Vagina (tissue), 2 donors: ENCODE measurements at regions of chr5 and their contacts with region 1.

Region 1: DNA sequence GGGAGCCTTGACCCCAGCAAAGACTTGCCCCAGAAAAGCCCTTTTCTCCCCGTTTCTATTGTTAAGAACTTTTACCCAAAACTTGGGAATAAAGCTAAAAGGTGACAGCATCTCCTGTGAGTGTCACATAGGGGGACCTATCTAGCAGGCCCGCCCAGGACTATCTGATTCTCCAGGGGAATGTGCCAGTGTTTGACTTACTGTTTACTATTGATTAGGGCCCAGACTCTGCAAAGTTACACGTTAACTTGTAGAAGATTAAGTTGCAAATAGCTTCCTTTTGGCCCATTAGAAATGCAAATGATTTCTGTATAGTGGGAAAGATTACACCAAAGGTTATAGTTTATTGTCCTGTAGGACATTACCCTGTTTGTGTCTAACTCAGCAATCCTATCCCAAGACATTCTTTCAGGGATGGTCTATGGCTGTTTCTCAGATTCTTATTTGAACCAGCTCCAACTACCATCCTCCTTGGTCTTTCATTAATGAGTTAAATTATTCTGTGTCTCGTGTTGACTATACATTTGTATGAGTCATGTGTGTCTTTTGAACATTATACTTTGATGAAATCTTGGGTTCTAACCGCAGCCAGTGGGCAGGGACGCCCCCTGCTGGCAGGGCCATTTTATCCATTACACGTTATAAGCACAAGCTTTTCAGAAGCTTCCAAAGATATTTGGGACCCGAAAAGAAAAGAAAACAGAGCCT is 60.7 kb downstream of the HRH2 start:
- DNase-seq: no peak
- H3K4me3 ChIP-seq: no peak overlapping the region
- H3K27ac ChIP-seq: no peak overlapping the region
- H3K4me1 ChIP-seq: no peaks in the 10 kb centered on the region
- H3K27me3 ChIP-seq: no peaks in the 10 kb centered on the region
- CTCF ChIP-seq: peak; percentile 15 to 47 (median 26)
- POLR2A ChIP-seq: no peak

Region 2: GRCh38 chr5:175638305-175638704 is 80.2 kb before region 1 on chr5:
- intact Hi-C with region 1: loop called (anchors 10 kb)
- DNase-seq: no peak
- H3K4me3 ChIP-seq: no peak overlapping the region
- H3K27ac ChIP-seq: no peak overlapping the region
- H3K4me1 ChIP-seq: no peaks in the 10 kb centered on the region
- H3K27me3 ChIP-seq: no peaks in the 10 kb centered on the region
- CTCF ChIP-seq: no peak
- POLR2A ChIP-seq: no peak